Heart left ventricle (tissue), 16 donors: ENCODE measurements at regions of chr10 and their contacts with region 1.

Region 1: GRCh38 chr10:122051251-122051996 is 62.5 kb downstream of the TACC2 start:
- DNase-seq: peak in 3 of 5 donors; percentile 44 to 55 (median 48)
- ATAC-seq: peak in 2 of 4 donors; percentile 27 to 33
- H3K4me3 ChIP-seq: no peak overlapping the region
- H3K27ac ChIP-seq: peak overlapping the region in 10 of 12 donors; percentile 19 to 77 (median 43)
- H3K4me1 ChIP-seq: peaks cover 0 to 57% (median 24%) of the 10 kb centered on the region in 12 donors
- H3K27me3 ChIP-seq: no peaks in the 10 kb centered on the region
- CTCF ChIP-seq: peak; percentile 38 to 82 (median 62)
- POLR2A ChIP-seq: no peak

Region 2: GRCh38 chr10:121974535-121975294 is 76.7 kb before region 1 on chr10 and contains the start of gene NSMCE4A:
- intact Hi-C with region 1: loop called in 7 of 10 experiments (anchors 2 to 10 kb)
- DNase-seq: peak; percentile 83 to 91 (median 85)
- ATAC-seq: peak; percentile 75 to 95 (median 90)
- H3K4me3 ChIP-seq: peak within 1 kb of the TSS; percentile 81 to 100 (median 97)
- H3K27ac ChIP-seq: peak within 1 kb of the TSS; percentile 97 to 100 (median 98)
- H3K4me1 ChIP-seq: peaks cover 0 to 27% (median 18%) of the 10 kb centered on the region in 12 donors
- H3K27me3 ChIP-seq: no peaks in the 10 kb centered on the region
- CTCF ChIP-seq: peak in 4 of 12 donors; percentile 41 to 84 (median 64)
- POLR2A ChIP-seq: peak in 1 of 2 donors; percentile 60
- total RNA-seq, gene NSMCE4A: 19.8 to 33.6 (median 25.6) TPM

Region 3: GRCh38 chr10:122021379-122021778 is 30.0 kb before region 1 on chr10:
- intact Hi-C with region 1: no loop called
- DNase-seq: no peak
- ATAC-seq: peak; percentile 19 to 49 (median 40)
- H3K4me3 ChIP-seq: no peak overlapping the region
- H3K27ac ChIP-seq: peak overlapping the region in 11 of 12 donors; percentile 17 to 87 (median 53)
- H3K4me1 ChIP-seq: peaks cover 0 to 37% (median 7%) of the 10 kb centered on the region in 12 donors
- H3K27me3 ChIP-seq: peaks cover 0 to 10% (median 0%) of the 10 kb centered on the region in 9 donors
- CTCF ChIP-seq: no peak
- POLR2A ChIP-seq: no peak

Region 4: GRCh38 chr10:122142641-122143237 is 91.3 kb after region 1 on chr10:
- intact Hi-C with region 1: loop called in 1 of 10 experiments (anchors 1 kb)
- DNase-seq: peak in 1 of 5 donors; percentile 53
- ATAC-seq: no peak
- H3K4me3 ChIP-seq: no peak overlapping the region
- H3K27ac ChIP-seq: peak overlapping the region; percentile 14 to 94 (median 87)
- H3K4me1 ChIP-seq: peaks cover 27 to 85% (median 68%) of the 10 kb centered on the region in 12 donors
- H3K27me3 ChIP-seq: no peaks in the 10 kb centered on the region
- CTCF ChIP-seq: peak; percentile 87 to 99 (median 94)
- POLR2A ChIP-seq: no peak

Region 5: GRCh38 chr10:122221958-122222357 is 170.5 kb after region 1 on chr10:
- intact Hi-C with region 1: loop called in 4 of 10 experiments (anchors 5 to 10 kb)
- DNase-seq: no peak
- ATAC-seq: peak in 3 of 4 donors; percentile 29 to 47 (median 33)
- H3K4me3 ChIP-seq: no peak overlapping the region
- H3K27ac ChIP-seq: no peak overlapping the region
- H3K4me1 ChIP-seq: peaks cover 0 to 2% (median 0%) of the 10 kb centered on the region in 12 donors
- H3K27me3 ChIP-seq: no peaks in the 10 kb centered on the region
- CTCF ChIP-seq: no peak
- POLR2A ChIP-seq: no peak

Region 6: DNA sequence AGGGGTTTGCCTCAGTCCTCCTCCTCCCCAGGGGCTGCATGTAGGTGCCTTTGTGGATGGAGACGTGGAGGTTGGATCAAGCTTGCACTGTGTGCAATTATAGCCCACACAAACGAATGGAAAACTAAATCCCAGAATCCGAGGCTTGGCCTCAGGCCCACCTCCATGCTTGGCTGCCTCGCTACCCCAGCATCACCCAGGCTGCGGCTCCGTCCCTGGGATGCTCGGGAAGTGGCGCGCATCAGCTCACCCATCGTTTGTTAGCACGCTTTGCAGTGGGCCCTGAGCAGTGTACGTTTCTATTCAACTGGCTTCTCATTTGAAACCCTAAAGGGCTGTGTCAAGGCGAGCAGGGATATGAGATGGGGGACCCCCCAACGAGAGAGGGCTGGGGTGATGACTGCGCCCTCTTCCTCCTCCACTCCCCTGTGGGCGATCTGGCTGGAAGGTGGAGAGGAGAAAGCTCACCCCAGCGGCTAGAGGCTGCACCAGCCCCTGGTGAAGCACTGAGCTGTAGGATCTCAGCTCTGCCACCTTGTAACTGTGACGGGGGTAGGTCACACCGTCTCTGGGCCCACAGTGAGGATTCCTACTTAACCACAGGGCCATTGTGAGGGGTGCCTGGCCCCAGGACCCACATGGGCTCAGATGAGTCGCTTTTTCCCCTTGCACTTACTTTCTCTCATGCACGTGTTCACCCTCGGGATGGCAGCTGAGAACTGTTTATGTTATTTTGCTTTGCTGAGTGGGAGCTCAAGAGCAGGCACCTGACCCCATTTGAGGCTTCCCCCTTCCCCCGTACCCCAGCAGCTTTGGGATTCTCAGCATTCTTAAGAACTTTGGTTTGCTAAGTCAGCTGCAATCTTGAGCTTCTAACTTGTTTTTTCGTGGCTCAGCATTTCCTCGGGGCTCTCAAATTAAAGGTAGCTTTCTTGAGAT is 207.0 kb after region 1 on chr10:
- intact Hi-C with region 1: loop called in 1 of 10 experiments (anchors 10 kb)
- DNase-seq: no peak
- ATAC-seq: peak in 3 of 4 donors; percentile 30 to 55 (median 43)
- H3K4me3 ChIP-seq: no peak overlapping the region
- H3K27ac ChIP-seq: no peak overlapping the region
- H3K4me1 ChIP-seq: peaks cover 0 to 8% (median 0%) of the 10 kb centered on the region in 12 donors
- H3K27me3 ChIP-seq: no peaks in the 10 kb centered on the region
- CTCF ChIP-seq: no peak
- POLR2A ChIP-seq: no peak